Endothelial cell of umbilical vein (primary cell): ENCODE measurements at regions of chr13 and their contacts with region 1.

Region 1: DNA sequence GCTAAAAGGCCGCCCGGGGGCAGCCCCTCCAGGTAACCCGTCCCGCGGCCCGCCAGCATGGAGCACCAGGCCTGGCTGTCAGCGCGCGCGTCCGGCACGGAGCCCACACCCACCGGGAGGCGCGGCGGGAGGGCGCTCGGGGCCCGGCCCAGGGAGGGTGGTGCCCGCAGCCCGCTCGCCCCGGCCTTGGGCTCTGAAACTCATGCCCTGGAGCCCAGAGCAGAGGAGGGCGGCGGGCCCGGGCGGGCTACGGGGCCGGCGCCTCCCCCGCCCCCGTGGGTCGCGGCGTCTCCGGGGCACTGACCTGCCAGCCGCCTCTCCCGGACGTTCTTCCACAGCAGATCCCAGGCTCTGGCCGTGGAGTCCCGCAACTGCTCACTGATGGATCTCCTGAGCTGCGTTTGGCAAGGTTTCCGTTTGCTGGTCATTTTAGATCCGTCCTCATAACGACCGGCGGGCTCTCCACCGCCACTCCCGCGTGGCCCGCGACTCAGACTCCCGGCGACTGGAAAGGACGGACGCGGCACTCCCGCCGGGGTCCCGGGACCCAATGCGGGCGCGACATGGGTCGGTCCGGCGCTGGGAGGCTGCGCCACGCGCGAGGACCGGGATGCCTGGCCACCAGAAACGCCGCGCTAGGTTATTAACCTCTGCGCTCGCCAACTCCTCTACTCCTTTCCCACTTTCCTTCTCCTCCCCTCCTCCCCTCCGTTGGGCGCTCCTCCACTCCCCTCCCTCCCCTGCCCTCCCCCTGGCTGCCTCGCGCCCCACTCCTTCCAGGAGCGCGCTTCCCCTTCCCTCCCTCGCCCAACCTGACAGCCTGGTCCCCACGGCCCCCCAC is 64.7 kb upstream of the STARD13 start:
- DNase-seq: peak; percentile 49
- H3K4me3 ChIP-seq: peak overlapping the region; percentile 78 to 86 (median 82)
- H3K27ac ChIP-seq: peak overlapping the region; percentile 78
- H3K4me1 ChIP-seq: peaks cover 16% of the 10 kb centered on the region
- H3K27me3 ChIP-seq: no peaks in the 10 kb centered on the region
- CTCF ChIP-seq: no peak
- POLR2A ChIP-seq: no peak

Region 2: GRCh38 chr13:33228648-33229445 is 121.4 kb before region 1 on chr13:
- CTCF ChIA-PET with region 1: interaction called, 5 read pairs
- POLR2A ChIA-PET with region 1: no interaction called
- dilution Hi-C with region 1: no loop called
- intact Hi-C with region 1: loop called (anchors 1 kb)
- DNase-seq: peak; percentile 71
- H3K4me3 ChIP-seq: no peak overlapping the region
- H3K27ac ChIP-seq: peak overlapping the region; percentile 46
- H3K4me1 ChIP-seq: peaks cover 31% of the 10 kb centered on the region
- H3K27me3 ChIP-seq: no peaks in the 10 kb centered on the region
- CTCF ChIP-seq: peak; percentile 65 to 70
- POLR2A ChIP-seq: no peak

Region 3: GRCh38 chr13:33367926-33368325 is 17.7 kb after region 1 on chr13:
- CTCF ChIA-PET with region 1: interaction called, 4 read pairs
- POLR2A ChIA-PET with region 1: no interaction called
- dilution Hi-C with region 1: no loop called
- intact Hi-C with region 1: loop called (anchors 2 kb)
- DNase-seq: peak; percentile 15
- H3K4me3 ChIP-seq: no peak overlapping the region
- H3K27ac ChIP-seq: no peak overlapping the region
- H3K4me1 ChIP-seq: peaks cover 5% of the 10 kb centered on the region
- H3K27me3 ChIP-seq: no peaks in the 10 kb centered on the region
- CTCF ChIP-seq: no peak
- POLR2A ChIP-seq: no peak